Aorta (tissue), 5 donors: ENCODE measurements at regions of chr12 and their contacts with region 1.

Region 1: GRCh38 chr12:105814283-105814682 is 324.5 kb downstream of the NUAK1 start:
- DNase-seq: no peak
- ATAC-seq: no peak
- H3K4me3 ChIP-seq: no peak overlapping the region
- H3K27ac ChIP-seq: no peak overlapping the region
- H3K4me1 ChIP-seq: peaks cover 4 to 14% of the 10 kb centered on the region in 2 donors
- H3K27me3 ChIP-seq: no peaks in the 10 kb centered on the region

Region 2: DNA sequence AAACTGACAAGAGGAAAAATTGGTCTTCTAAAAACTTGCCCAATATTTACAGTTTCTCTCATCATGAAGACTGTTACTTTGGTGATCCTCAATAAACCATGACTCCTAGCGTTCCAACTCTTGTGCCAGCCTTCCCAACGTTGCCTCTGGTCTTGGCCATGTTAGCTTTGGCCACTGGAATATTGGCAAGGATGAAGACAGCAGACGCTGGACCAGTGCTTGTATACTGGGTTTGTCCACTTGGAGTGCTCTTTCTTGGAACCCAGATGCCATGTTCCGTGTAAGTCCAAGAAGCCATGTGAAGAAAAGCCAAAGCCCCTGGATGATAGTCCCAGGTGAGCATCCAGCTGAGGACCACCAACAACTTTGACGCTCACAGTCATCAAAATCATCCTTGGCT is 55.1 kb before region 1 on chr12:
- intact Hi-C with region 1: loop called in 1 of 2 experiments (anchors 10 kb)
- DNase-seq: no peak
- ATAC-seq: no peak
- H3K4me3 ChIP-seq: no peak overlapping the region
- H3K27ac ChIP-seq: no peak overlapping the region
- H3K4me1 ChIP-seq: no peaks in the 10 kb centered on the region
- H3K27me3 ChIP-seq: no peaks in the 10 kb centered on the region

Region 3: DNA sequence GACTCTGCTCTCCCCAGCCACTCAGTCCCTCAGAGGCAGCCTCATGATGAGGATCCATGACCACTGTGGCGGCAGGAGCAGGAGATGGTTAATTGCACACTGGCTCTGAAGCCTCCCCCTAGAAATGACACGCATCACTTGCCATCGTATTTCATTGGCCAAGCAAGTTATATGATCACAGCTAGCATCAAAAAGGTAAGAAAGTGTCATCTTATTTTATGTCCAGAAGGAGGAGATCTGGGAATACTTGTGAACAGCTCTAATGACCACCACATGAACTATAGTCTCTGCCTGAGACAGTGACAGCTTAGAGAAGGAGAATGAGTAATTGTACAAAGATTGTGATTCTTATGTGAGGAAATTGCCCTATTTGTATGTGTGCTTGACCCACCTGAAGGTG is 38.9 kb before region 1 on chr12:
- intact Hi-C with region 1: no loop called
- DNase-seq: no peak
- ATAC-seq: no peak
- H3K4me3 ChIP-seq: no peak overlapping the region
- H3K27ac ChIP-seq: no peak overlapping the region
- H3K4me1 ChIP-seq: peaks cover 0 to 5% of the 10 kb centered on the region in 2 donors
- H3K27me3 ChIP-seq: no peaks in the 10 kb centered on the region

Region 4: DNA sequence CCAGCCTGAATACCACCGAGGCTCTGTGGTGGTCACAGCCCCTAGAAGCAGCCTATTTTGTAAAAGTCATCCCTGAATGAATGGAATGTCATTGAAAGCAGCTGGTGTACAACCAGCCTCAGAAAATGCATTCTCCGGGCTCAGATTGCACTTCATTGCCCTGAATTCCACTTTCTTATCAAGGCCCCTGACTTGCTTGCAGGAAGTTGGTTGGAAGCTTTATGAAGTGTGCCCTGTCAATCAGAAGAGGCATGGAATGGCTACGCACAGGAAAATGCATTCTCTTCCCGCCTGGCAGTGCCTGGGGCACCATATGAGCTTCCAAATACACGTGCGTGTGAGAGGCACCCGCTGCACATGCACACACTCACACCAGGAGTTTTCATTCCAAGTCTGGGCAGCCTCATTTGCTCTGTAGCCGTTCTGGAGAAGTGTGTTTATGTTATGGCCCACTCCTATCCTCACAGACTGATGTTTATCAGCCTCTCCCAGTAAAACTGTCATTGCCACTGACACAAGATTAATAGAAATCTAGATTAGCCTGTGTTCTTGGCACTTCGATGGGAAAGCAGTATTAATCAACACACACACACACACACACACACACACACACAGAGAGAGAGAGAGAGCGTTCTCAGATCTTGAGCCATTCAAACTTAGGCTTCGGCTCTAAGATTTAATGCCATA is 260.6 kb after region 1 on chr12:
- intact Hi-C with region 1: no loop called
- DNase-seq: peak in 1 of 2 donors; percentile 45
- ATAC-seq: peak; percentile 55
- H3K4me3 ChIP-seq: no peak overlapping the region
- H3K27ac ChIP-seq: peak overlapping the region; percentile 68 to 69
- H3K4me1 ChIP-seq: peaks cover 3 to 14% of the 10 kb centered on the region in 2 donors
- H3K27me3 ChIP-seq: no peaks in the 10 kb centered on the region